Panc1 (cell line): ENCODE measurements at regions of chr1 and their contacts with region 1.

Region 1: DNA sequence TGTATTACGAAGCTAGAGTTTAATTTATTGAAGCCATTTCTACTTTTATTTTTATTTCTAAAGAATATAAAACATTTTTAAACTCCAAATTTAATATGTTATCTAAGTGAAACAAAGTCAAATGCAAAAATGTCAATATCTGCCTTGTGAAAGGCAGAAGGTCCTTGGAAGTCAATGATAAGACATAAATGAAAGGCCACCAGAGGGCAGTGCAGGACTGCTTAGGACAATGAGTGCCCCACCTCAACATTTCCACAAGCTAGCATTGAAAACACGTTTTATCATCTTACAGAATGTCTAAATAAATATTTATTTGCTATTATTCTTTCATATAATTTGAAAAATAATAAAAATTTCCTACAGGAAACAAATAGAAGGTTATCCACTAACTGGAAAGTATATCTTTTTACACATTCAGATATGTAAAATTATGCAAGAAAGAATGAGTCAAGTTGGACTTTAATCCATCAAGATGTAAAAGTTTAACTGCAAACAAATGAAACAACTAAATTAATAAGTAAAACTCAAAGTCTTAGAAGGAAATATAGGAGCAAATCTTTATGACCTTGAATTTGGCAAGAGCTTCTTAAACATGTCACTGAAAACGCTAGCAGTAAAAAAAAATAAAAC is 140.1 kb upstream of the FMN2 start:
- DNase-seq: peak; percentile 50
- ATAC-seq: peak; percentile 77; the same call in 1 of the 2 replicates
- H3K4me3 ChIP-seq: no peak overlapping the region
- H3K27ac ChIP-seq: no peak overlapping the region
- H3K4me1 ChIP-seq: no peaks in the 10 kb centered on the region
- H3K27me3 ChIP-seq: no peaks in the 10 kb centered on the region
- CTCF ChIP-seq: peak; percentile 79; the same call in 1 of the 2 replicates

Region 2: DNA sequence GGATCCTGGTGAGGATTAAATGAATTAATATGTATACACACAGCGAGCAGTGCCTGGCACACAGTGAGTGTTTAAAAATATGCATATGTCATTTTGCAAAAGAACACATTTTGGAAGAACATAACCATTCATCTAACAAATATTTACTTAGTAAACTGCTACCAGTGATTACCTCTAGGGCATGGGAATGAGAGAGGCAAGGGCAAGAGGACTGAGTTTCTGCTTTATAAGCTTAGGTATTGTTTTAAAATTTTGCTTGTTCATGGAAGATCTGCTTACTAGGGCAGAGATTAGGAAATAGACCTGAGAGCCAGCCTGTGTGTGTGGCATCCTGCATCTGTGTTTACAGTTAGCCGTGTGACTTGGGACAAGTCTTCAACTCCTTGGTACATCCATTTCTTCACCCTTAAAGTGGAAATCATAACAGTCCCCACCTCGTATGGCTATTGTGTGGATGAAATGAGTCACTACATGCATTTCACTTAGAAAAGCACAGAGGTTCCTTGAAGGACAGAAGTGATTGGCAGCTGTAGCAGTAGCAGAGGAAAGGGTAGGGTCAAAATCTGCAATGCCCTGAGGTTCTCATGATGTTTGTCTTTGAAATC is 58.4 kb before region 1 on chr1:
- CTCF ChIA-PET with region 1: no interaction called
- POLR2A ChIA-PET with region 1: no interaction called
- in situ Hi-C with region 1: no loop called
- intact Hi-C with region 1: no loop called
- DNase-seq: no peak
- ATAC-seq: no peak
- H3K4me3 ChIP-seq: no peak overlapping the region
- H3K27ac ChIP-seq: no peak overlapping the region
- H3K4me1 ChIP-seq: no peaks in the 10 kb centered on the region
- H3K27me3 ChIP-seq: no peaks in the 10 kb centered on the region
- CTCF ChIP-seq: no peak

Region 3: GRCh38 chr1:239976130-239976968 is 24.7 kb after region 1 on chr1:
- CTCF ChIA-PET with region 1: no interaction called
- POLR2A ChIA-PET with region 1: no interaction called
- in situ Hi-C with region 1: no loop called
- intact Hi-C with region 1: loop called (anchors 1 kb)
- DNase-seq: peak; percentile 35
- ATAC-seq: peak; percentile 74
- H3K4me3 ChIP-seq: no peak overlapping the region
- H3K27ac ChIP-seq: no peak overlapping the region
- H3K4me1 ChIP-seq: no peaks in the 10 kb centered on the region
- H3K27me3 ChIP-seq: no peaks in the 10 kb centered on the region
- CTCF ChIP-seq: peak; percentile 92

Region 4: DNA sequence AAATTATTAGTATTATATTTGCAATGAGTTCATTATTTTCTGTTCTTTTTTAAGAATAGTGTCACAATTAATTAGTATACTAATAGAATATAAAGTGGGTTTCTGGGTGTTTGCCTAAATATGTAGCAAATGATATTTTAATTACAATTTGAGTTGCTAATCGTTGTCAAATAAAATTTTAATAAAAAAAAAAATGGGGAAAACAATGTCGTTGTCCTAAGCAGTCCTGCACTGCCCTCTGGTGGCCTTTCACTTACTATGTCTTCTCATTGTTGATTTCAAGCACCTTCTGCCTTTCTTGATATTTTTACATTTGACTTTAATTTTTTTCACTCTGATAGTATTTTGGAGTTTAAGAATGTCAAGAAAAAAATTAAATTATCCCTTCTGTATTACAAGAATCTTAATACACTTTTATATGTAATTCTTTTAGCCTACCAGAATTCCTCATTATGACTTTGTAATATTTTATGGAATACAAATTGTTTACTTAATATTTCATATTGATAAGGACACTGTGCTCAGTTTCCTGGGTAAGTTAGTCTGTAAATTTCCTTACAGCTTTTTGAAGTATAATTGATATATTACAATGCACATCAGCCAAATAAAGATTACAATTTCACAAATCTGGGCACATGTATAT is 35.6 kb after region 1 on chr1:
- CTCF ChIA-PET with region 1: no interaction called
- POLR2A ChIA-PET with region 1: no interaction called
- in situ Hi-C with region 1: no loop called
- intact Hi-C with region 1: loop called (anchors 2 kb)
- DNase-seq: no peak
- ATAC-seq: no peak
- H3K4me3 ChIP-seq: no peak overlapping the region
- H3K27ac ChIP-seq: no peak overlapping the region
- H3K4me1 ChIP-seq: no peaks in the 10 kb centered on the region
- H3K27me3 ChIP-seq: no peaks in the 10 kb centered on the region
- CTCF ChIP-seq: peak; percentile 76; the same call in 1 of the 2 replicates